IMR-90 (cell line): ENCODE measurements at regions of chr1 and their contacts with region 1.

Region 1: GRCh38 chr1:71521655-71522264 is 440.9 kb upstream of the ZRANB2 start:
- DNase-seq: peak; percentile 43
- ATAC-seq: peak; percentile 78
- H3K4me3 ChIP-seq: no peak overlapping the region
- H3K27ac ChIP-seq: no peak overlapping the region
- H3K4me1 ChIP-seq: no peaks in the 10 kb centered on the region
- H3K27me3 ChIP-seq: no peaks in the 10 kb centered on the region
- CTCF ChIP-seq: peak; percentile 71
- POLR2A ChIP-seq: no peak
- RAD21 ChIP-seq: peak; percentile 73

Region 2: DNA sequence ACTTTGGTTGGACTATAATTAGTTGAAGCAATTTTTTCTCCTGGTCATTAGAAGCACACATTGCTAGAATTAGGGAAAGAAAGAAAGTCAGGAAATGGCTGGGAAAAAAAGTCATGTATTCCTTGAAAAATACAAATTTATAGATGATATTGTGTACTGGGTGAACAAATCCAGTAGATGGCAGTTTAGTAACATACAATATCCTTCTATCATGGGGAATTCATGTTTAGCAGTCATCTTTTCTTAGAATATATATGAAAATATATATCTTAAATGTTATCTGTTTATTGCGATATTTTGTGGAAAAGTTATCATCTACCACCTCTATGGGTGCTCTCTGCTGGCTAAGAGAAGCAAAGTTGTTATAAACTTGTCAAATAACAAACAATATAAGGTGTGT is 427.8 kb before region 1 on chr1:
- CTCF ChIA-PET with region 1: no interaction called
- POLR2A ChIA-PET with region 1: no interaction called
- dilution Hi-C with region 1: no loop called
- in situ Hi-C with region 1: no loop called
- intact Hi-C with region 1: loop called (anchors 2 kb)
- DNase-seq: peak; percentile 45
- ATAC-seq: peak; percentile 41
- H3K4me3 ChIP-seq: no peak overlapping the region
- H3K27ac ChIP-seq: no peak overlapping the region
- H3K4me1 ChIP-seq: peaks cover 4% of the 10 kb centered on the region
- H3K27me3 ChIP-seq: no peaks in the 10 kb centered on the region
- CTCF ChIP-seq: peak; percentile 74
- POLR2A ChIP-seq: no peak
- RAD21 ChIP-seq: peak; percentile 72

Region 3: DNA sequence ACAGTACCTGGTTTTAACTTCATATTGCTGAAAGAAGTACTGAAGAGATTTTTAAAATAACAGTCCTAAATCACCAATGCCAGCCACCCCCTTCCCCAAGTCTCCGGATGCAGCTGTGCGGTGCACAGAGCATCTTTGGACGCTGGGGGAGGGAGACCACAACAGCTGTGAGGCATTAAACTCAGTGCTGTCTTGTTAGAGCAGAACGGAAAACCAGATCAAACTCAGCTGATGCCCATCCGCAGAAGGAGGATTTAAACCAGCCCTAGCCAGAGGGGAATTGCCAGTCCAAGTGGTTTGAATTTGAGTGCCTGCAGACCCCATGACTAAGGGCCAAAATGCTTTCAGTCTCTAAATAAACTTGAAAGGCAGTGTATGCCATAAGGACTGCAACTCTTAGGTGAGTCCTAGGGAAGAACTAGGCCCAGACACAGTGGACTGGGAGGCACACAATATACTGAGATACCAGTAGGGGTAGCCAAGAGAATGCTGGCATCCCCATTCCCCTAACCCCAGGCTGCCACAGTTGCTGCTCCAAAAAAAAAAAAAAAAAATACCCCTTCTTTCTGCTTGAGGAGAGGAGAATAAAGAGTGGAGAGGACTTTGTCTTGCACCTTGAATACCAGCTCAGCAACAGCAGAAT is 184.4 kb after region 1 on chr1:
- CTCF ChIA-PET with region 1: no interaction called
- POLR2A ChIA-PET with region 1: no interaction called
- dilution Hi-C with region 1: no loop called
- in situ Hi-C with region 1: no loop called
- intact Hi-C with region 1: no loop called
- DNase-seq: peak; percentile 15
- ATAC-seq: no peak
- H3K4me3 ChIP-seq: no peak overlapping the region
- H3K27ac ChIP-seq: no peak overlapping the region
- H3K4me1 ChIP-seq: no peaks in the 10 kb centered on the region
- H3K27me3 ChIP-seq: no peaks in the 10 kb centered on the region
- CTCF ChIP-seq: no peak
- POLR2A ChIP-seq: no peak
- RAD21 ChIP-seq: no peak